Activated CD4-positive, alpha-beta T cell treated with anti-CD3 and anti-CD28 coated beads, Interleukin-2, amount 10 ng/mL, durations not matched to agents 7 days and 5 days (primary cell): ENCODE measurements at regions of chr14 and their contacts with region 1.

Region 1: GRCh38 chr14:50360851-50361250 is 35.8 kb downstream of the CDKL1 start:
- DNase-seq: no peak
- H3K4me3 Mint-ChIP-seq: no peak overlapping the region
- H3K27ac Mint-ChIP-seq: no peak overlapping the region
- H3K4me1 Mint-ChIP-seq: peaks cover 38% of the 10 kb centered on the region
- H3K27me3 Mint-ChIP-seq: no peaks in the 10 kb centered on the region

Region 2: GRCh38 chr14:50344116-50344775 is 16.6 kb before region 1 on chr14:
- CTCF ChIA-PET with region 1: interaction called, 11 read pairs
- POLR2A ChIA-PET with region 1: no interaction called
- DNase-seq: peak; percentile 28
- H3K4me3 Mint-ChIP-seq: no peak overlapping the region
- H3K27ac Mint-ChIP-seq: peak overlapping the region; percentile 48
- H3K4me1 Mint-ChIP-seq: peaks cover 22% of the 10 kb centered on the region
- H3K27me3 Mint-ChIP-seq: no peaks in the 10 kb centered on the region